ENCODE measurements at regions of chr10 and their contacts with region 1.

Region 1: DNA sequence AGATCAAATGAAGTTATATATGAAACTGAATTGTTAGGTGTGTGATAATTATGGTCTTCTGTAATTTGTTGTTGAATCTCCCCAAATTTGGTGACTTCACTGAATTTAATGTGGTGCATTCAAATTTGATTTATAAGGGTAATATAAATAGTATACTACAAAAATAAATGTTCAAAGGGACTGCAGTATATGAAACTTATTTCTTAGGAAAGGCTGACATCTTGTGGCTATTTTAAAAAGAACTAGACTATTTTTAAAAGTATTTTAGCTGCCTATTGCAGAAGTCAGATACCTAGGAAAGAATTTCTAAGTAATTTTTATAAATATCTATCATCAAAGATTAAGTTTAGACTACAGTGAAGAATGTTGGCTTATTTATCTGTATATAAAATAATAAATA is 36.6 kb downstream of the ATRNL1 start:
- DNase-seq: no peak
- ATAC-seq: no peak

Region 2: GRCh38 chr10:114876602-114877300 is 253.0 kb before region 1 on chr10:
- intact Hi-C with region 1: loop called (anchors 1 to 5 kb)
- DNase-seq: peak; percentile 66
- ATAC-seq: peak; percentile 85 to 91